Endothelial cell of umbilical vein (primary cell): ENCODE measurements at regions of chr3 and their contacts with region 1.

Region 1: DNA sequence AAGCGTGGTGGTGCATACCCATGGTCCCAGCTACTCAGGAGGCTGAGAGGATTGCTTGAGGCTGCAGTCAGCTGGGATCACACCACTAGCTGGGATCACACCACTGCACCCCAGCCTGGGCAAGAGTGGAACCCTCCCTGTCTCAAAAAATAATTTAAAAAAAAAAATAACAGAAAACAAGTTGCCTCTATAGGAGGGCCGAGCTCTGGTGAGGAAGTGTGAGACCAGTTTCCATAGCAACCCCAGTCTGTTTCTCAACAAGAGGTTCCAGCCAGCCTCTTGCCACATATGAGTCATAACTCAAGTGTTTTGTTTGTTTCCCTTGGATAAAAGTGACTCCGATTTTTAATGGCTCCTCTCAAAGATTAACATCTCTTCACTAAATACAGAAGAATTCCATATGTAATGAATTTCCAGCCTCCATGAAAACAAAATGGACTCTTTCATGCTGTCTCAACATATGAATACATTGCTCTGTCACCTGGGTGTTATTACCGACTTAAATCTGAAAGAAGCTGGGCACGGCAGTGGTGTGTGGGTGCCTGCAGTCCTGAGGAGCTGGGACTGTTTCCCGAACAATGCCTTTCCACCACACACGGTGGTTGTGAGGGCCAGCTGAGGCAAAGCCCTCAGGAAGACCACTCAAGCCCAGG is 19.7 kb downstream of the TMEM43 start:
- DNase-seq: peak; percentile 97
- H3K4me3 ChIP-seq: peak overlapping the region in 1 of 3 experiments; percentile 20
- H3K27ac ChIP-seq: peak overlapping the region; percentile 100
- H3K4me1 ChIP-seq: peaks cover 41% of the 10 kb centered on the region
- H3K27me3 ChIP-seq: no peaks in the 10 kb centered on the region
- CTCF ChIP-seq: no peak
- POLR2A ChIP-seq: peak; percentile 69

Region 2: DNA sequence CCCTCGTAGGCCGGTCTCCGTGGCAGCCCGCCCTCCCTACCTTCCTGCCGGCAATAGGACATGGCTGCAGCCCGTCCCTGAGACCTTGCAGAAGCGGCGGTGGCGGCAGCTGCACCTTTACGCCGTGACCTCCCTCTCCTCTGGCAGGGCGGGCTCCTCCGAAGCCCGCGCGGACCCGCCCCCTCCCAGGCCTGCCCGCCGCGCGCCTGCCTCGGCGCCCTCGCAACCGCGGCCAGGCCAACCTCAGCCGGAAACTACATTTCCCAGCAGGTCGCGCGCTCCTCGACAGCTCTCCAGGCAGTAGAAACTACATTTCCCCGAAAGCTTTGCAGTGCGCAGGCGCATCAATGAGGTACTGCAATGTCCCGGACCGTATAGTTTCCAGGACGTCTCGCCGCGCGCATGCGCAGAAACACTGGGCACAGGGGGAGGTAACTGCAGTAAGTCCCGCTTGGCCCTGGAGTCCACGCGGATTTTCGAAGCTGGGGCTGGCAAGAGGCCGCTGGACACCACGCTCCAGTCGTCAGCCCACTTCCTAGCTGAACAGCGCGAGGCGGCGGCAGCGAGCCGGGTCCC is 19.8 kb before region 1 on chr3 and contains the starts of genes CHCHD4 and TMEM43:
- CTCF ChIA-PET with region 1: interaction called, 30 read pairs
- POLR2A ChIA-PET with region 1: interaction called, 30 read pairs
- dilution Hi-C with region 1: no loop called
- intact Hi-C with region 1: loop called (anchors 1 kb)
- DNase-seq: peak; percentile 99
- H3K4me3 ChIP-seq: peak within 1 kb of the TSS; percentile 66 to 90 (median 67)
- H3K27ac ChIP-seq: peak within 1 kb of the TSS; percentile 61
- H3K4me1 ChIP-seq: peaks cover 22% of the 10 kb centered on the region
- H3K27me3 ChIP-seq: no peaks in the 10 kb centered on the region
- CTCF ChIP-seq: peak in 1 of 2 donors; percentile 1
- POLR2A ChIP-seq: peak; percentile 58
- total RNA-seq, gene CHCHD4: 12.4 and 13.6 TPM in 2 replicates
- total RNA-seq, gene TMEM43: 69.6 and 80.6 TPM in 2 replicates